Posterior cingulate gyrus (tissue), 11 donors: ENCODE measurements at regions of chr17 and their contacts with region 1.

Region 1: GRCh38 chr17:81027591-81028505 is 7.1 kb upstream of the BAIAP2 start:
- DNase-seq: peak in 3 of 10 donors; percentile 86 to 93 (median 86)

Region 2: GRCh38 chr17:81094509-81095382 is 66.9 kb after region 1 on chr17:
- intact Hi-C with region 1: loop called (anchors 5 kb)
- DNase-seq: peak; percentile 61 to 98 (median 85)